ENCODE measurements at regions of chr14 and their contacts with region 1.

Region 1: DNA sequence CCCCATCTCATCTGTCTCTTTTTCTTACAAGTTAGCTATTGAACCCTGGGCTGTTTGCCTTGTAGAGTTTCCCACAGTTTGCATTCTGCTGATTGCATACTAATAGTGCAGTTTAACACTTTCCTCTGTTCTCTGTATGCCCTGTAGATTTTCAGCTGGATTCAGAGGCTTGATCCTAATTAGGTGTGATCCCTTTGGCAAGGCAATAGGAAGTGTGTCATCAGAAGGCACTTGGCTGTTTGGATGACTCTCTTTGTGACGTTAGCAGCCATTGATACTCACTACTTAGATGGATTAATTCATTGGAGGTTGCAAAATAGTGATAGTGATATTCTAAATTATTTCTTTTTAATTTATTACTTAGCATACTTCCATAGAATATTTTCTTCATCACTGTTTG is 33.6 kb downstream of the FUT8 start:
- DNase-seq: no peak
- H3K4me3 ChIP-seq: no peak overlapping the region
- H3K4me3 Mint-ChIP-seq: no peak overlapping the region
- H3K27ac Mint-ChIP-seq: no peak overlapping the region
- H3K4me1 ChIP-seq: no peaks in the 10 kb centered on the region
- H3K4me1 Mint-ChIP-seq: peaks cover 7% of the 10 kb centered on the region
- H3K27me3 ChIP-seq: no peaks in the 10 kb centered on the region
- H3K27me3 Mint-ChIP-seq: no peaks in the 10 kb centered on the region
- CTCF ChIP-seq: no peak

Region 2: GRCh38 chr14:65429757-65430317 is 16.3 kb before region 1 on chr14:
- CTCF ChIA-PET with region 1: no interaction called
- POLR2A ChIA-PET with region 1: interaction called, 10 read pairs
- intact Hi-C with region 1: no loop called
- DNase-seq: no peak
- H3K4me3 ChIP-seq: no peak overlapping the region
- H3K4me3 Mint-ChIP-seq: no peak overlapping the region
- H3K27ac Mint-ChIP-seq: no peak overlapping the region
- H3K4me1 ChIP-seq: peaks cover 10% of the 10 kb centered on the region; the same call in 1 of the 2 replicates
- H3K4me1 Mint-ChIP-seq: peaks cover 35% of the 10 kb centered on the region
- H3K27me3 ChIP-seq: no peaks in the 10 kb centered on the region
- H3K27me3 Mint-ChIP-seq: no peaks in the 10 kb centered on the region
- CTCF ChIP-seq: no peak

Region 3: GRCh38 chr14:65560340-65561027 is 114.3 kb after region 1 on chr14:
- CTCF ChIA-PET with region 1: no interaction called
- POLR2A ChIA-PET with region 1: no interaction called
- intact Hi-C with region 1: no loop called
- DNase-seq: no peak
- H3K4me3 ChIP-seq: no peak overlapping the region
- H3K4me3 Mint-ChIP-seq: no peak overlapping the region
- H3K27ac Mint-ChIP-seq: no peak overlapping the region
- H3K4me1 ChIP-seq: peaks cover 4% of the 10 kb centered on the region
- H3K4me1 Mint-ChIP-seq: no peaks in the 10 kb centered on the region
- H3K27me3 ChIP-seq: no peaks in the 10 kb centered on the region
- H3K27me3 Mint-ChIP-seq: no peaks in the 10 kb centered on the region
- CTCF ChIP-seq: no peak

Measured in Caco-2 (cell line).